ENCODE measurements at regions of chr7 and their contacts with region 1.

Region 1: GRCh38 chr7:105013221-105013815 is 687 bp upstream of the KMT2E start:
- DNase-seq: peak; percentile 94 to 96 (median 95)
- H3K4me3 ChIP-seq: peak overlapping the region; percentile 67
- H3K27ac ChIP-seq: peak overlapping the region; percentile 97 to 98
- H3K4me1 ChIP-seq: peaks cover 2% of the 10 kb centered on the region
- H3K27me3 ChIP-seq: no peaks in the 10 kb centered on the region
- CTCF ChIP-seq: peak; percentile 55 to 90 (median 84)
- EP300 ChIP-seq: peak; percentile 47
- POLR2A ChIP-seq: peak; percentile 69

Region 2: GRCh38 chr7:103967401-103967800 is 1045.9 kb before region 1 on chr7:
- intact Hi-C with region 1: no loop called
- DNase-seq: no peak
- H3K4me3 ChIP-seq: no peak overlapping the region
- H3K27ac ChIP-seq: no peak overlapping the region
- H3K4me1 ChIP-seq: no peaks in the 10 kb centered on the region
- H3K27me3 ChIP-seq: no peaks in the 10 kb centered on the region
- CTCF ChIP-seq: no peak
- EP300 ChIP-seq: no peak
- POLR2A ChIP-seq: no peak

Region 3: DNA sequence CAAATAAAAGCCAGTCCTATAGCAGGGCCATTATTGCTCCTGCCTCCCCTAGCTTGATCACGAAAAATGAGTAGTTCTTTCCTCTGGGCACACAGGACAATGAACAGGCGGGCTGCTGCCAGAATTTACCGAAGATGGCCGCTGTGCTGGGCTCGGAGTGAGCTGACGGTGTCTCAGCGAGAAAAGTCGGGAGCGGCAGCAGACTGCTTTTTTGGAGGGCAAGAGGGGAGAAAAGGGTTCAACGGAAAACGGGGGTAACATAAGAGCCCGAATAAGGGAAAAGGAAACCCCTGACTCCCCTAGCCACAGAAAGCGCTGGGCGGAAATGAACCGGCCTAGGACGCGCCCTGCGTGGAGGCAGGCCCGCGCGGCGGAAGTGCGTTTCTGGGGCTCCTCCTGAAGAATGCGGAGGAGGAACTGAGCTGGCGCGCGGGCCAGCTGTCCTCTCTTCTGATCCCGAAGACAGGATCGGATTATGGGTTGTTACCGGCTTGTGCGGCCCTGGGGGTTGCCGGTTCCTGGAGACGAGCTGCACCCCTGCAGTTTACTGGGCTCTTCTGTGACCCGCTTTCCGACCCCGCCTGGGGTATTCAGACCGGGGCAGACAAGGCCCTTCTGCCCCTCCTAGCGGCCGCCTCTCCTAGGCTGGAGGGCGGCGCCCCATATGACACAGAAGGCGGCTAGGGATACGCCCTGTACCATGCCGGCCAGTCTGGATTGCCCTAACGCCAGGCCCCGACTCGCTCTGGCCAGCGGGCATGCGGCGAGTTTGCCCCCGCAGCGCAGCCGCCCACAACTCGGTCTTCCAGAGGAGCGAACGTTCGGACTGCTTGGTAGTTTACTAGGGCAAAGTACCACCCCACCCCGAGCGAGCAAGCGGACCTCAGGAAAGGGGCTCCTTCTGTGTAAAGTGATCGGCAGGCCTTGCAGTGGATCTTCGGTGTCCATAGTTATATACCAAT is 29.5 kb before region 1 on chr7:
- intact Hi-C with region 1: loop called in 2 of 4 experiments (anchors 2 to 5 kb)
- DNase-seq: peak; percentile 85 to 92 (median 87)
- H3K4me3 ChIP-seq: peak overlapping the region; percentile 68
- H3K27ac ChIP-seq: peak overlapping the region; percentile 96 to 97
- H3K4me1 ChIP-seq: peaks cover 10% of the 10 kb centered on the region
- H3K27me3 ChIP-seq: no peaks in the 10 kb centered on the region
- CTCF ChIP-seq: peak in 2 of 3 donors; percentile 68 to 75
- EP300 ChIP-seq: peak; percentile 25
- POLR2A ChIP-seq: peak; percentile 64

Region 4: DNA sequence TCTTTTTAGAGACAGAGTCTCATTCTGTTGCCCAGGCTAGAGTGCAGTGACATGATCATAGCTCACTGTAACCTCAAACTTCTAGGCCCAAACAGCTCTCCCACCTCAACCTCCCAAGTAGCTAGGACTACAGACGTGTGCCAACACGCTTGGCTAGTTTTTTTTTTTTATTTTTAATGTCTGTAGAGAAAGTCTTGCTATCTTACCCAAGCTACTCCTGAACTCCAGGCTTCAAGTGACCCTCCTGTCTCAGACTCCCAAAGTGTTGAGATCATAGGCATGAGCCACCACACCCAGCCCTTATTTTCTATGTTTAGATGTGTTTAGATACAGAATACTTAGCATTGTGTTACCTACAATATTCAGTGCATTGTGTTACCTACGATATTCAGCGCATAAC is 47.1 kb after region 1 on chr7:
- intact Hi-C with region 1: no loop called
- DNase-seq: no peak
- H3K4me3 ChIP-seq: no peak overlapping the region
- H3K27ac ChIP-seq: no peak overlapping the region
- H3K4me1 ChIP-seq: peaks cover 2% of the 10 kb centered on the region
- H3K27me3 ChIP-seq: no peaks in the 10 kb centered on the region
- CTCF ChIP-seq: no peak
- EP300 ChIP-seq: no peak
- POLR2A ChIP-seq: no peak

Region 5: GRCh38 chr7:105156731-105157130 is 143.4 kb after region 1 on chr7:
- intact Hi-C with region 1: no loop called
- DNase-seq: no peak
- H3K4me3 ChIP-seq: no peak overlapping the region
- H3K27ac ChIP-seq: no peak overlapping the region
- H3K4me1 ChIP-seq: no peaks in the 10 kb centered on the region
- H3K27me3 ChIP-seq: no peaks in the 10 kb centered on the region
- CTCF ChIP-seq: no peak
- EP300 ChIP-seq: no peak
- POLR2A ChIP-seq: no peak

Region 6: DNA sequence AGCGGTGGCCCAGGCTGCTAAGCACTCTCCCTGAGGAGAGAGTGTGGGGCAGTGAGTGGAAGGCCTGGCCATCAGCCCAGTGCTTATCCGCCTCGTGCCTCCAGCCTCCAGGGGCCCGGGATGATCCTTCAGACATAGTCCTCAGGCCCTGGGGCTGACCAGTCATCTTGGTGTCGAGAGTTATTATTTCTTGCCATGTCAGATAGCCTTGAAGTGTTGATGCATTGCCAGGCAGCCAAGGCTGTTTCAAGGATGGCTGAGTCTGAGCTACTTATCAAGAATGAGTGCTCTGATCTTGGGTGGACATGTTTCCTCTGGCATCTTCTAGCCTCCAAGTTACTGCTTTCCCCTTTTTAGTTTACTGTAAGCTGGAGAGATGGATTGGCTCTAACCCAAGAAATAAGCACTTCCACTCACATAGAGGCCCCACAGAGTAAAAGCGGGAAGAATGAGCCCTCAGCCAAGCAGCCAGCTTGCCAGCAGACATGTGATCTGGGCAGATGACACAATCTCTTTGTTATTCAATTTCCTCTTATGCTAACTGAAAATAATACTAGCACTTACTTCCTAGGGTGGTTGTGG is 1408.0 kb after region 1 on chr7:
- intact Hi-C with region 1: loop called in 1 of 4 experiments (anchors 5 kb)
- DNase-seq: peak; percentile 73 to 89 (median 87)
- H3K4me3 ChIP-seq: no peak overlapping the region
- H3K27ac ChIP-seq: peak overlapping the region; percentile 41 to 81
- H3K4me1 ChIP-seq: peaks cover 10% of the 10 kb centered on the region
- H3K27me3 ChIP-seq: no peaks in the 10 kb centered on the region
- CTCF ChIP-seq: no peak
- EP300 ChIP-seq: peak; percentile 82
- POLR2A ChIP-seq: no peak